Activated B cell treated with CpG ODN at 0.5 μM for 24 hours (primary cell): ENCODE measurements at regions of chr3 and their contacts with region 1.

Region 1: GRCh38 chr3:183161552-183162336 is 790 bp downstream of the LAMP3 start:
- DNase-seq: peak; percentile 36
- ATAC-seq: peak; percentile 78
- H3K4me3 Mint-ChIP-seq: peak overlapping the region; percentile 81
- H3K27ac Mint-ChIP-seq: peak overlapping the region; percentile 77
- H3K4me1 Mint-ChIP-seq: peaks cover 34% of the 10 kb centered on the region
- H3K27me3 Mint-ChIP-seq: peaks cover 48% of the 10 kb centered on the region
- CTCF ChIP-seq: no peak

Region 2: GRCh38 chr3:183178629-183179549 is 17.1 kb after region 1 on chr3:
- CTCF ChIA-PET with region 1: interaction called, 4 read pairs
- POLR2A ChIA-PET with region 1: no interaction called
- intact Hi-C with region 1: loop called (anchors 2 kb)
- DNase-seq: no peak
- ATAC-seq: peak; percentile 61
- H3K4me3 Mint-ChIP-seq: peak overlapping the region; percentile 46
- H3K27ac Mint-ChIP-seq: no peak overlapping the region
- H3K4me1 Mint-ChIP-seq: peaks cover 12% of the 10 kb centered on the region
- H3K27me3 Mint-ChIP-seq: peaks cover 60% of the 10 kb centered on the region
- CTCF ChIP-seq: no peak

Region 3: GRCh38 chr3:183688871-183689270 is 527.1 kb after region 1 on chr3:
- CTCF ChIA-PET with region 1: no interaction called
- POLR2A ChIA-PET with region 1: no interaction called
- intact Hi-C with region 1: no loop called
- DNase-seq: no peak
- ATAC-seq: no peak
- H3K4me3 Mint-ChIP-seq: no peak overlapping the region
- H3K27ac Mint-ChIP-seq: no peak overlapping the region
- H3K4me1 Mint-ChIP-seq: no peaks in the 10 kb centered on the region
- H3K27me3 Mint-ChIP-seq: no peaks in the 10 kb centered on the region
- CTCF ChIP-seq: no peak